Left ventricle myocardium inferior (tissue), 1 donor: ENCODE measurements at regions of chr2 and their contacts with region 1.

Region 1: DNA sequence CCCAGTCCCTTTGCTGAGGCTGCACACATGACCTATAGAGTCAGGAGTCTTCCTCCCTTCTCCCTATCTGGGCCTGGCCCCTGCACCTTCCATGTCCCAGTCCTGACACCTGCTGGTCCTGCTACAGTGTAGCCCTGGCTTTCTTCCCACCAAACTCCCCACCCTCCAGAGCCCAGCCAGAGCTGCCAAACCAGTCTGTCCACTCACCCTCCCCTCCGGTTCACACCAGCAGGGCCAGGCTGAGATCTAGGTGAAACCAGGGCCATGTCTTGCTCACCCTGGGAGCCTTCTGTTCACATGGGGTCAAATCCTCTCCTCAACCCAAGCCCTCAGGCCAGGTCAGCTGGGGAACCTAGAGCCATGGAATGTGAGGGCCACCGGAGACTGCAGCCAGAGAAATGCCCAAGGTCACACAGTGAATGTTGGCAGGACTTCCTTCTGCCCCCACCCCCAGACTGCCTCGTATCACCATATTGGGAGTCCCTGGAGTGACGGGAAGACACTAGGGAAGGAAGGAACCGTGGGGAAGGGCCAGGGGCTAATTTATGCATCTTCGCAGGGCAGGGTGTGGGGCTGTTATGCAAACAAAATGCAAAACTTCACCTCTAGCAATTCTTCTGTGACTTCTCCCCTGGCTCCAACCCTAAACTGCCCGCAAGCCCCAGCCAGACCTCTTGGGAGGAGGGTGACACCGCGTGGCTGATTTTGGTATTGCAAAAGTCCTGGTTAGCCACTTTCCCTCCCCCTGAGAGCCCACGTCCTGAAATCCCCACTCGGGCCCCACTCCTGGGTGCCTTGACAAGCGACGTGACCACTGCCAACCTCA is 14.6 kb downstream of the TNS1 start:
- DNase-seq: peak; percentile 88
- H3K4me3 ChIP-seq: peak overlapping the region; percentile 43
- H3K27ac ChIP-seq: peak overlapping the region; percentile 84
- H3K4me1 ChIP-seq: peaks cover 54% of the 10 kb centered on the region
- H3K27me3 ChIP-seq: no peaks in the 10 kb centered on the region
- CTCF ChIP-seq: peak; percentile 88

Region 2: GRCh38 chr2:217886720-217887309 is 101.4 kb before region 1 on chr2:
- intact Hi-C with region 1: loop called (anchors 5 kb)
- DNase-seq: peak; percentile 65
- H3K4me3 ChIP-seq: no peak overlapping the region
- H3K27ac ChIP-seq: peak overlapping the region; percentile 78
- H3K4me1 ChIP-seq: peaks cover 75% of the 10 kb centered on the region
- H3K27me3 ChIP-seq: no peaks in the 10 kb centered on the region
- CTCF ChIP-seq: peak; percentile 85

Region 3: GRCh38 chr2:217953531-217953932 is 34.7 kb before region 1 on chr2:
- intact Hi-C with region 1: loop called (anchors 5 kb)
- DNase-seq: no peak
- H3K4me3 ChIP-seq: peak overlapping the region; percentile 7
- H3K27ac ChIP-seq: peak overlapping the region; percentile 91
- H3K4me1 ChIP-seq: peaks cover 98% of the 10 kb centered on the region
- H3K27me3 ChIP-seq: no peaks in the 10 kb centered on the region
- CTCF ChIP-seq: peak; percentile 34